ENCODE measurements at regions of chr5 and their contacts with region 1.

Region 1: GRCh38 chr5:177113566-177114424 is 19.8 kb upstream of the NSD1 start:
- DNase-seq: peak; percentile 74 to 94
- ATAC-seq: peak; percentile 75
- H3K4me3 ChIP-seq: no peak overlapping the region
- H3K27ac ChIP-seq: no peak overlapping the region
- H3K4me1 ChIP-seq: peaks cover 4% of the 10 kb centered on the region; the same call in 1 of the 3 replicates
- CTCF ChIP-seq: peak; percentile 97
- EP300 ChIP-seq: no peak
- POLR2A ChIP-seq: no peak
- RAD21 ChIP-seq: peak; percentile 95 to 99

Region 2: DNA sequence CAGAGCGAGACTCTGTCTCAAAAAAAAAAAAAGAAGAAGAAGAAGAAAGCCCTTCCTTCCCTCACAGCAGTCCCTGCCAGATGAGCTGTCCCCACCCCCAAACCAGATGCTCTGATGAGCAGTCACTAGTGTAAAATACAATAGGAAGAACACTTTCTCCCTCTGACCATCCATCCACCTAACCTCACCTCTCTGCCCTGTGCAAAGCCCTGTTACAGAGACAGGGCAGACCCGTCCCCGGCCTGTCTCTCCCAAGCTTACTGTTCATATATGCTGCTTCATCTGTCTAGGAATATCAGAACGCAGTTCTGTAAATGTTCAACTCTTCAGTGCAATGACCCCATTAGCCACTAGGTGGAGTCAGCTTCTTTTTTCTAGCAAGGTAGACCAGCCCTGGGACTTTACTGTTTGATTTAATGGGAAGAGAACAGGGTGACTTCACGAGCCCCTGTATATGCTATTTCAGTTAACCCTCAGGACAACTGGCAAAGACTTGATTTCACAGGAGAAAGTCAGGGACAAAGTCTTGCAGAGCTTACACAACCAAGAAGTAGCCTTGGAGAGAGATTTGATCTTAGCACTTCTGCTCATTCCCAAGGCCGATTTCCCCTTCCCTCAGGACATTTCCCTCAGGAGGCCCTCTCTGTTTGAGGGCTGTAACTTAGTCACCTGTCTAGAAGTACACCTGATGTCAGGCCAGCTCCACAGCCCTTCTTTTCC is 42.0 kb before region 1 on chr5:
- CTCF ChIA-PET with region 1: interaction called, 148 read pairs
- POLR2A ChIA-PET with region 1: no interaction called
- DNase-seq: peak; percentile 79 to 82
- ATAC-seq: peak; percentile 89 to 95
- H3K4me3 ChIP-seq: no peak overlapping the region
- H3K27ac ChIP-seq: no peak overlapping the region
- H3K4me1 ChIP-seq: peaks cover 7% of the 10 kb centered on the region; the same call in 1 of the 3 replicates
- CTCF ChIP-seq: peak; percentile 83
- EP300 ChIP-seq: no peak
- POLR2A ChIP-seq: no peak
- RAD21 ChIP-seq: peak; percentile 71 to 74

Region 3: GRCh38 chr5:177133091-177133852 is 19.5 kb after region 1 on chr5 and contains the start of gene NSD1:
- CTCF ChIA-PET with region 1: interaction called, 168 read pairs
- POLR2A ChIA-PET with region 1: interaction called, 3 read pairs
- DNase-seq: peak; percentile 63 to 76
- ATAC-seq: peak; percentile 48 to 67
- H3K4me3 ChIP-seq: peak within 1 kb of the TSS; percentile 80
- H3K27ac ChIP-seq: peak within 1 kb of the TSS; percentile 94 to 96
- H3K4me1 ChIP-seq: peaks cover 31% of the 10 kb centered on the region
- CTCF ChIP-seq: no peak
- EP300 ChIP-seq: no peak
- POLR2A ChIP-seq: peak; percentile 44
- RAD21 ChIP-seq: no peak
- polyA plus RNA-seq, gene NSD1: 35.5 and 38.2 TPM in 2 replicates

Region 4: GRCh38 chr5:177311723-177312648 is 198.2 kb after region 1 on chr5 and contains the start of gene MXD3:
- CTCF ChIA-PET with region 1: interaction called, 40 read pairs
- POLR2A ChIA-PET with region 1: no interaction called
- DNase-seq: peak; percentile 90 to 97
- ATAC-seq: peak; percentile 62 to 82
- H3K4me3 ChIP-seq: peak within 1 kb of the TSS; percentile 66
- H3K27ac ChIP-seq: peak within 1 kb of the TSS; percentile 87 to 93
- H3K4me1 ChIP-seq: peaks cover 19% of the 10 kb centered on the region; the same call in 2 of the 3 replicates
- CTCF ChIP-seq: no peak
- EP300 ChIP-seq: no peak
- POLR2A ChIP-seq: peak; percentile 22; the same call in 1 of the 2 replicates
- RAD21 ChIP-seq: no peak
- polyA plus RNA-seq, gene MXD3: 4.1 and 5.3 TPM in 2 replicates

Region 5: GRCh38 chr5:177382423-177383029 is 268.7 kb after region 1 on chr5:
- CTCF ChIA-PET with region 1: interaction called, 11 read pairs
- POLR2A ChIA-PET with region 1: no interaction called
- DNase-seq: peak in 1 of 2 experiments; percentile 59
- ATAC-seq: peak; percentile 37 to 63; a peak in 3 of 6 replicates
- H3K4me3 ChIP-seq: no peak overlapping the region
- H3K27ac ChIP-seq: peak overlapping the region in 1 of 2 experiments; percentile 3; a peak in 1 of 6 replicates
- H3K4me1 ChIP-seq: peaks cover 23% of the 10 kb centered on the region
- CTCF ChIP-seq: 0 out of 3 replicates have a peak, but pooled peaks have one; percentile 11
- EP300 ChIP-seq: no peak
- POLR2A ChIP-seq: no peak
- RAD21 ChIP-seq: 0 out of 5 replicates have a peak, but pooled peaks of 1 of the 2 experiments have one; percentile 31